ENCODE measurements at regions of chr19 and their contacts with region 1.

Region 1: DNA sequence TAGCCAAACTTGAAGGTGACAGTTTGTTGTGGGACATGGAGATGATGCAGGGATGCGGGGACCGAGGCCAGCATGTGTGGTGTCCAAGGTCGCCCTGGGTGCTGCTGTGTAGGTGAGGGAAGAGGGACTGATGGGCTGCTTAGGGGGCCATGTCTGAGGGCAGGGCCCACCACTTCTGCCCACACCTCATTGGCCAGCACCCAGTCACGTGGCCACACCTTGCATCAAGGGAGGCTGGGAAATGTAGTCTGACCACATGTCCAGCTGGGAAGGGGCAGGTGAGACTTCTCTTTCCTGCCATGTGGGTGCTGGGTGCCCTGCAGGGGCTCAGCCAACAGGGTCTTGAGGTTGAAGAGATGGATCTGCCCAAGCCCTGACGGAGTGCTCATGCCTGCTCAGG is 88.9 kb downstream of the KDM4B start:
- DNase-seq: peak in 1 of 5 donors; percentile 47
- H3K4me3 ChIP-seq: no peak overlapping the region
- H3K27ac ChIP-seq: no peak overlapping the region
- H3K4me1 ChIP-seq: peaks cover 17% of the 10 kb centered on the region
- H3K27me3 ChIP-seq: no peaks in the 10 kb centered on the region
- CTCF ChIP-seq: no peak
- EP300 ChIP-seq: no peak
- POLR2A ChIP-seq: no peak

Region 2: GRCh38 chr19:4744451-4745174 is 313.2 kb before region 1 on chr19:
- intact Hi-C with region 1: no loop called
- DNase-seq: peak; percentile 57 to 80 (median 72)
- H3K4me3 ChIP-seq: no peak overlapping the region
- H3K27ac ChIP-seq: peak overlapping the region in 1 of 2 donors; percentile 6
- H3K4me1 ChIP-seq: peaks cover 17% of the 10 kb centered on the region
- H3K27me3 ChIP-seq: no peaks in the 10 kb centered on the region
- CTCF ChIP-seq: no peak
- EP300 ChIP-seq: no peak
- POLR2A ChIP-seq: no peak

Region 3: GRCh38 chr19:4980810-4981680 is 76.8 kb before region 1 on chr19:
- intact Hi-C with region 1: no loop called
- DNase-seq: no peak
- H3K4me3 ChIP-seq: no peak overlapping the region
- H3K27ac ChIP-seq: no peak overlapping the region
- H3K4me1 ChIP-seq: peaks cover 27% of the 10 kb centered on the region
- H3K27me3 ChIP-seq: no peaks in the 10 kb centered on the region
- CTCF ChIP-seq: no peak
- EP300 ChIP-seq: no peak
- POLR2A ChIP-seq: no peak

Region 4: DNA sequence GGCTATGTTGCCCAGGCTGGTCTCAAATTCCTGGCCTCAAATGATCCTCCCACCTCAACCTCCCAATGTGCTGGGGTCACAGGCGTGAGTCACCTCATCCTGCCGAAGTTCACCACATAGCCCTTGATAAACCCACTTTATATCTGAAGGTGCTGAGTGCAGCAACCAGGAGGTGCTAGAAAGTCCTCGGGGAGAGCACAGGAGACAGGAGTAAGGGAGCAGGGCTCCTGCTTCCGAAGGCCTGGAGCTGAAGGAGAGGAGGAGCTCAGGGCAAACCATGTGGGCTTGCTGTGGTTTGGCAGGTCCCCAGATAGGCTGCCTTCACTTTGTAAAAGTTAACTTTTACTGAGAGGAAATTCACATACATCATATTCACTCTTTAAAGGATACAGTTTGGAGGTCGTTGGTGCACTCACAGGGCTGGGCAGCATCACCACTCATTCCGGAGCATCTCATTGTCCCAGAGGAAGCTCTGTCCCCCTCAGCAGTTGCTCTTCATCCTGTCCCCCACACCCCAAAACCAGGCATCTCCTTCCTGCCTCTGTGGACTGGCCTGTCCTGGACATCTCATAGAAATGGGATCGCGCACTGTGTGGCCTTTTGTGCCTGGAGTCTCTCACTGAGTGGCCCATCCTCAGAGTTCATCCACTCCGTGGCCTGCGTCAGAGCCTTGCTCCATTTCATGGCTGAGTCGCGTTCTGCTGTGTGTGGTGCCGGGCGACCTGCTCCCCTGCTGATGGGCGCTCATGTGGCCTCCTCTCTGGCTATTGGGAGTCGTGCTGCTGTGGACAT is 39.4 kb before region 1 on chr19:
- intact Hi-C with region 1: no loop called
- DNase-seq: no peak
- H3K4me3 ChIP-seq: no peak overlapping the region
- H3K27ac ChIP-seq: no peak overlapping the region
- H3K4me1 ChIP-seq: peaks cover 8% of the 10 kb centered on the region
- H3K27me3 ChIP-seq: no peaks in the 10 kb centered on the region
- CTCF ChIP-seq: no peak
- EP300 ChIP-seq: no peak
- POLR2A ChIP-seq: no peak

Region 5: GRCh38 chr19:5086725-5087439 is 29.0 kb after region 1 on chr19:
- intact Hi-C with region 1: no loop called
- DNase-seq: no peak
- H3K4me3 ChIP-seq: no peak overlapping the region
- H3K27ac ChIP-seq: no peak overlapping the region
- H3K4me1 ChIP-seq: peaks cover 12% of the 10 kb centered on the region
- H3K27me3 ChIP-seq: no peaks in the 10 kb centered on the region
- CTCF ChIP-seq: no peak
- EP300 ChIP-seq: no peak
- POLR2A ChIP-seq: no peak

Region 6: DNA sequence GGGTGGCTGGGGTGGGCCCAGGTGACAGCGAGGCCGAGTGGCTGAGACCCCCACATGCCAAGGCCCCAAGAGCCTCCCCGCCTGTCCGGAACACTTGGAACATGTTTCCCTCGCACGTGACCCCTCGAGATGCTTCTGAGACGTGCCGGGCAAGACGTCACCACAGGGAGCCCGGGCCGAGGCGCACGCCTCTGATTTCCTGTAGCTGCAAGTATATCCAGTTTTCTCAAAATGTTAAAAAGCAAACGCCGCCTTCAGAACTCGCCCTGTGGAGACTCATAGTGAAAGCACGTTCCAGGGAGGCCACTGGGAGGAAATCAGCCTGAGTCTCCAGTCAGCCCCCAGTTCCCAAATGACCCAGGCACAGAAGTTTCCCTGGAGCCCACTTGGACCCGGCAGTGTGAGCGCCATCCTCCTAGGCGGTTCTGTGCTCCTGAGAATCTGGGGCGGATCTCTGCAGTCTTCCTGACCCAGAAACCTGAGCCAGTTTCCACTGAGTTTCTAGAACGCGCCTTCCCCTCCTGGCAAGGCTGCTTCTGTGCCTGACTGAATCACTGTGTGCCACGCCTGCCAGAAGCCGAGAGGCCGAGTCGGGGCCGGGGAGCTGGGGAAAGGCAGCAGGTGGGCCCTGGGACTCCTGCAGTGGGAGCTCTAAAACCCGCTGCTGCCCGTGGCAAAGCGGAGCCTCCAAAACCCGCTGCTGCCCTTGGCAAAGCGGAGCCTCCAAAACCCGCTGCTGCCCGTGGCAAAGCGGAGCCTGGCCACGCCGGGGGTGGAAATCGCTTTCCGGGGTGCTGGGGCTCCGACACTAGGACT is 90.3 kb after region 1 on chr19:
- intact Hi-C with region 1: loop called in 1 of 4 experiments (anchors 10 kb)
- DNase-seq: peak in 2 of 5 donors; percentile 14 to 17
- H3K4me3 ChIP-seq: no peak overlapping the region
- H3K27ac ChIP-seq: no peak overlapping the region
- H3K4me1 ChIP-seq: peaks cover 2% of the 10 kb centered on the region
- H3K27me3 ChIP-seq: no peaks in the 10 kb centered on the region
- CTCF ChIP-seq: no peak
- EP300 ChIP-seq: no peak
- POLR2A ChIP-seq: no peak

Measured in ovary (tissue), 10 donors.